ENCODE measurements at regions of chr17 and their contacts with region 1.

Region 1: GRCh38 chr17:50865984-50866774 is at the start of gene TOB1:
- DNase-seq: peak; percentile 99
- ATAC-seq: peak; percentile 76
- H3K4me3 ChIP-seq: peak within 1 kb of the TSS; percentile 85
- H3K27ac ChIP-seq: peak within 1 kb of the TSS; percentile 87
- H3K4me1 ChIP-seq: peaks cover 39% of the 10 kb centered on the region
- H3K27me3 ChIP-seq: no peaks in the 10 kb centered on the region
- CTCF ChIP-seq: no peak
- total RNA-seq, gene TOB1: 28.7 and 39.3 TPM in 2 replicates

Region 2: DNA sequence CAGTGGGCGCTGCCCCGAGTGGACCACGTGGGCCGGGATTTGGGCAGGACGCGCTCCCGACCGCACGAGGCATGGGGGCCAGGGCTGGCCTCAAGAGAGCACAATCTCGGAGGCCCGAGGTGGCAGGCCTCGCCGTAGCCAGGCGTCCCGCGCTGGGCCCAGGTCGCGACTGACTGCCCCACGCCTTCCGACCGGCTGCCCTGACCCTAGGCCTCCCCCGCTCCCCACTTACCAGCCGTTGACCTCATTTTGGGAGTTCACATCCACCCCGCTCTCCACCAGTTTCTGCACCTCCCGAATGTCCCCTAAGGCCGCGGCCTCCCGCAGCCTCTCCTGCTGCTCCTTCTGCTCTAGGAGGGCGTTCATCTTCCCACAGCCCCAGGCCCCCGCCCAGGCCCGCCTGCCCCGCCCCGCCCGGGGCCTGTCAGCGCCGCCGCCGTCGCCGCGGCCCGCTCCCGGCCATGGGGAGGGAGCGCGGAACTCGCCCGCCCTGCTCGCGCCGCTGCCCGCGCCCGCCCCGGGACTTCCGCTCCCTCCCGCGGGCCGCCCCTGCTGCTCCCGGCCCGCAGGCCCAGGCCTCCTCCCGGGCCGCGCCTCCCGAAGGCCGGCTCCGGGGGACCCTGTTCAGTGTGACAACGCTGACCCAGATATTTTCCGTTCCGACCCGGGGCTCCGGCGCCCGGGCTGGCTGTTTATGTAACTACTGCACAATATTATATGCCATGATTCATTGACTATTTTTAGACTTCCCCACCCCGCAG is 158.7 kb before region 1 on chr17 and contains the start of gene ANKRD40:
- CTCF ChIA-PET with region 1: no interaction called
- POLR2A ChIA-PET with region 1: interaction called, 11 read pairs
- intact Hi-C with region 1: no loop called
- DNase-seq: peak; percentile 98
- ATAC-seq: peak; percentile 71
- H3K4me3 ChIP-seq: peak within 1 kb of the TSS; percentile 82
- H3K27ac ChIP-seq: peak within 1 kb of the TSS; percentile 84
- H3K4me1 ChIP-seq: peaks cover 23% of the 10 kb centered on the region
- H3K27me3 ChIP-seq: no peaks in the 10 kb centered on the region
- CTCF ChIP-seq: no peak
- total RNA-seq, gene ANKRD40: 44.2 and 44.3 TPM in 2 replicates

Region 3: DNA sequence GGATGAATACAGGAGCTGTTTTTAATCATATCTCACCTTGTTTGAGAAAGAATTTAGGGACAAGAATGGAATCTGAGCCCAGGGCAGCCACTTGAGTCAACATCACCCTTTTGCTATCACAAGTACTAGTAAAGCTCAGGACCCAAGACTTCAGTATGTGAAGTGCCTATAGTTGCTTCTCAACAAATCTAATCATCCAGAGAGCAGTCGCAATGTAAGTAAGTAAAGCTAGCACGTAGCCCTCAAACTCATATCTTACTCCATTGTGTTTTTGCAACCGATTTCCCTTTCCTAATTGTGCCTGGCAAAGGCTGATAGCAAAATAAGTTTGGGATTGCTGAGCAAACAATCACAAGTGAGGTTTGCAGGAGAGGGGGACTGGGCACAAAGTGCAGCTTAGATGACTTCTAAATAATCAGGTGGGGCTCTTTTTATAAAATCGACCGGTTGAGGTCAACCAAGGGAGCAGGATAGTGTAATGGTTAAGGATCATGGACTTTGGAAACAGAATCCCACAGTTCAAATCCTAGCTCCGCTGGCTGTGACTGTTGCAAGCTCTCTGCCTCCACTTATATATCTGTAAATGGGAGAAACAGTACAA is 13.1 kb before region 1 on chr17:
- CTCF ChIA-PET with region 1: interaction called, 8 read pairs
- POLR2A ChIA-PET with region 1: interaction called, 12 read pairs
- intact Hi-C with region 1: no loop called
- DNase-seq: no peak
- ATAC-seq: no peak
- H3K4me3 ChIP-seq: no peak overlapping the region
- H3K27ac ChIP-seq: no peak overlapping the region
- H3K4me1 ChIP-seq: peaks cover 12% of the 10 kb centered on the region
- H3K27me3 ChIP-seq: no peaks in the 10 kb centered on the region
- CTCF ChIP-seq: no peak

Region 4: DNA sequence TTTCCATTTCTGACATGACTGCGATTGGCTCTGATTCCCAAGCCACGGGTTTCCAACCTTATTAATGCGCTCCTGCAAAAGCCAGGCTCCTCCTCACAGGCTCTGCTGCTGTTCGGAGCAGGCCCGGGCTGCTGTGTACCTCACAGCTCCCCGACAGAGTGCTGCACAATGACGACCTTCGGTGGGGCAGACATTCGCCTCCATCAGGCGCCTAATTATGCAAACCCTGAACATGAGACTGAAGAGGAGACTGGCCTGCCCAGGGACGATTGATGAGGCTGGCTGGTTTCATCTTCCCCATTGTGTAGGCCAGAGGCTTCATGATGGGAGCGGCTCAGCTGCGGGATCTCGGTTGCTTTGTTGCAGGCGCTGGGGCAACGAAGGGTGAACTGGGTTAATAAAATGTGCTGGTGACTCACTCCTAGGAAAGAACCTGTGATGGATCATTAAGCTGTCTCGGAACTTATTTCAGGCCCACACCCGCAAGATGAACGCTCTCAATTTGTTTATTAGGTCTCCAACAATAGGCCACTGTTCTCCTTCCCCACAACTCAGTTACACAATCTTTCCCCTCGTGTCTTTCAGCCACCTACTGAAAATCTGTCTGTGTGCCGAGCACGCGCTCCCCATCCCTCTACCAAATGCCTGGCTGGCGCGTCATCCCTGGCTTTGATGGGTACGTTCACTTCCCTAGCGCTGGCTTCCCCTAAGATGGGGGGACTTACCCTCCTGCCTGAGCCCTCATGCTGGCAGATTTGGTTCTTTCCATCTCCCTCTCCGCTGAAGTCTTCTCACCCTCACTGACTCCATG is 27.2 kb after region 1 on chr17:
- CTCF ChIA-PET with region 1: interaction called, 5 read pairs
- POLR2A ChIA-PET with region 1: interaction called, 14 read pairs
- intact Hi-C with region 1: loop called (anchors 1 kb)
- DNase-seq: peak; percentile 86
- ATAC-seq: peak; percentile 44
- H3K4me3 ChIP-seq: peak overlapping the region; percentile 1; the same call in 1 of the 2 replicates
- H3K27ac ChIP-seq: peak overlapping the region; percentile 77
- H3K4me1 ChIP-seq: peaks cover 44% of the 10 kb centered on the region
- H3K27me3 ChIP-seq: no peaks in the 10 kb centered on the region
- CTCF ChIP-seq: no peak

Region 5: DNA sequence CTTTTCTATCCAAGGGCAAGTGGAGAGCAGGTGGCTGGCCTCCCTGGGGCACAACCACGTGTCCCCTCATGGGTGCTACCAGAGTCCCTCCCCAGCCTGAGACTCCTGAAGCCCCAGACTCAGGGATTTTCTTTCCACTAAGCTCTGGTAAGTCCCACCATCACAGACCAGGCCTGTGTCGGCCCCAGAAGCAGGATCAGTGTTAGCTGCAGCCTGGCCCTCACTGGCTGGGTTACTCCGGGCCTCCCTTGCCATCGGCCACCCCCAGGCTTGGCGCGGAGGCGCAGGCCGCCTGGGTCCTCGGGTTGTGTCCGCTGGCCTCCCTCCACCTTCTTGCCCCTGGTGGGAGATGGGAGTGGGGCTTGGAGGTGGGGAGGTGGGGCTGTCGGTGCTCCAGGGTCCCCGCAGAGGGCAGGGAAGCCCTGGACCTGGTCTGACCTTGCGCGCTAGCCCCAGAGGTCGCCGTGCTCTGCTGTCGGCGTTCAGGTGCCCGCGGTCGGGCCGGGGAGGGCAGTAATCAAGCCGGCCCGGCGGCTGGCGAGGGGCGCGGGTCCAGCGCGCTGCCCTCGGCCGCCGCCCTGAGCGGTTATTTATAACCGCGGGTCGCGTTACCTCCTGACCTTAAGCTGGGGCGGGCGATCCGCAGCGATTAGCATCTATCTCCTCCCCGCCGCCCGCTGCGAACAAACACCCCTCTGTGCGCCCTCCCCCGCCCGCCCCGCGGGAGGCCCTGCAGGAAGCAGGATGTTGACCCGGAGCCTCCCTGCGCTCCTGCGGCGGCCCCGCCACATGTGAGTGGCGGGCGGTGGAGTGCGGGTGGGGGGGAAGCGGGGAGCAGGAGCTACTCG is 78.1 kb after region 1 on chr17:
- CTCF ChIA-PET with region 1: interaction called, 8 read pairs
- POLR2A ChIA-PET with region 1: interaction called, 17 read pairs
- intact Hi-C with region 1: loop called (anchors 1 kb)
- DNase-seq: peak; percentile 79
- ATAC-seq: peak; percentile 84
- H3K4me3 ChIP-seq: peak overlapping the region; percentile 70
- H3K27ac ChIP-seq: peak overlapping the region; percentile 11; the same call in 1 of the 2 replicates
- H3K4me1 ChIP-seq: peaks cover 27% of the 10 kb centered on the region
- H3K27me3 ChIP-seq: no peaks in the 10 kb centered on the region
- CTCF ChIP-seq: no peak

Region 6: GRCh38 chr17:51046514-51047384 is 180.6 kb after region 1 on chr17:
- CTCF ChIA-PET with region 1: no interaction called
- POLR2A ChIA-PET with region 1: interaction called, 11 read pairs
- intact Hi-C with region 1: no loop called
- DNase-seq: no peak
- ATAC-seq: no peak; the same call in 1 of the 2 replicates
- H3K4me3 ChIP-seq: no peak overlapping the region
- H3K27ac ChIP-seq: no peak overlapping the region
- H3K4me1 ChIP-seq: peaks cover 9% of the 10 kb centered on the region; the same call in 1 of the 2 replicates
- H3K27me3 ChIP-seq: no peaks in the 10 kb centered on the region
- CTCF ChIP-seq: no peak

Region 7: GRCh38 chr17:51166197-51166986 is 300.2 kb after region 1 on chr17 and contains the start of gene NME2:
- CTCF ChIA-PET with region 1: interaction called, 10 read pairs
- POLR2A ChIA-PET with region 1: interaction called, 3 read pairs
- intact Hi-C with region 1: no loop called
- DNase-seq: peak; percentile 97
- ATAC-seq: peak; percentile 91
- H3K4me3 ChIP-seq: peak within 1 kb of the TSS; percentile 81
- H3K27ac ChIP-seq: peak within 1 kb of the TSS; percentile 73
- H3K4me1 ChIP-seq: peaks cover 21% of the 10 kb centered on the region
- H3K27me3 ChIP-seq: no peaks in the 10 kb centered on the region
- CTCF ChIP-seq: no peak
- total RNA-seq, gene NME2: 1,420 and 1,558 TPM in 2 replicates

Measured in PC-3 (cell line).